Posterior vena cava (tissue), 2 donors: ENCODE measurements at regions of chr5 and their contacts with region 1.

Region 1: DNA sequence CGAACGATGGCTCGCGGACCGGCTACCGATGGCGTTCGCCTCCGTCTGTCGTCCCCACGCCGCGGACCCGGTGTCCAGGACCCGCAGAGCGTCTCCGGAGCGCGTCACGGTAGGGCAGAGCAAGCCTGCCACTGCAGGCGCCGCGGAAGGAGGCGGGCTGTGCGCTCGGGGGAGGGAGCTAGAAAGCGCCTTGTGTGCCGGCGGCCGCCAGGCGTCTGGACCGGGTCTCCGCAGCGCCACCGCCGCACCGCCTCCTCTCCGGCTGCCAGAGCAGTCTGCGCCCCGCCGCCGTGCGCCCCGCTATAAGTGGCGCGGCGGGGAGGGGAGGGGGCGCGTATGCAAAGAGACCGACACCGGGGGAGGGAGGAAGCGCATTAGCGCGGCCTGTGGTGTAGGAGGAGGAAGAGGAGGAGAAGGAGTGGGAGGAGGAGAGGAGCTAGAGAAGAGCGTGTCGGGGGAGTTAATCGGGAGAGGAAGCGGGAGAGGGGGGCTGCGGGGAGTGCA is at the start of gene ENC1:
- DNase-seq: peak; percentile 96
- total RNA-seq, gene ENC1: 12.4 to 12.7 TPM

Region 2: GRCh38 chr5:74034733-74035132 is 605.8 kb before region 1 on chr5:
- intact Hi-C with region 1: loop called (anchors 1 to 5 kb)
- DNase-seq: no peak

Region 3: GRCh38 chr5:74622122-74622521 is 18.4 kb before region 1 on chr5:
- intact Hi-C with region 1: no loop called
- DNase-seq: no peak